ENCODE measurements at regions of chr12 and their contacts with region 1.

Region 1: GRCh38 chr12:66693901-66694675 is 15.2 kb upstream of the GRIP1 start:
- DNase-seq: no peak
- ATAC-seq: peak; percentile 63

Region 2: GRCh38 chr12:66860752-66861750 is 167.0 kb after region 1 on chr12:
- intact Hi-C with region 1: loop called (anchors 5 kb)
- DNase-seq: peak; percentile 43
- ATAC-seq: no peak

Region 3: DNA sequence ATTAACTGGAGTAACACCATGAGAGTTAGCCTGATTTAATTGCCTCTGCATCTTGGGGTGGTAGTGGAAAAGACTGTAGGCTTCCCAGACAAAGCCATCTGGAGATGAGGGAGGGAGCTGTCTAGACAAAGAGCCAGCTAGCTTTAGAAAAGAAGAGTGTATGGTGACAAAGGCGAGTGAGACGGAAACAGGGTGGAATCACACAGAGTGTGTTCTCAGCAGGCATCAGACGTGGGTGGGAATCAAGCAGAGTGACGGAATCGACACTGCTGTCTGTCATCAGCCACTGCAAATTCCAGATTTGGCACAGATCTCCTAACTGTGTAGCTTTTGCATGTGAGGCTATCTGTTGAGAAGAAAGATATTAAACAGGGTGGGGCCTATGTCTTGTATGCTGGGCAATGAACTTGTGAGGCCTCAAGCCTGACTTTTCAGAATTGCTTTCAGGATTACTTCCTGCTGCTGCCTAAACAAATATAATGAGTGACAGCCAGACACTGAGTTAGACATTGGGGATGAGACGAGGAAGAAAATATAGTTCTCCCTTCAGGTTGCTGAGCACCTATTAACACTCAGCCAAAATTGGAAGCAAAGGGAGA is 221.3 kb after region 1 on chr12:
- intact Hi-C with region 1: no loop called
- DNase-seq: no peak
- ATAC-seq: peak; percentile 17